ENCODE measurements at regions of chrX and their contacts with region 1.

Region 1: DNA sequence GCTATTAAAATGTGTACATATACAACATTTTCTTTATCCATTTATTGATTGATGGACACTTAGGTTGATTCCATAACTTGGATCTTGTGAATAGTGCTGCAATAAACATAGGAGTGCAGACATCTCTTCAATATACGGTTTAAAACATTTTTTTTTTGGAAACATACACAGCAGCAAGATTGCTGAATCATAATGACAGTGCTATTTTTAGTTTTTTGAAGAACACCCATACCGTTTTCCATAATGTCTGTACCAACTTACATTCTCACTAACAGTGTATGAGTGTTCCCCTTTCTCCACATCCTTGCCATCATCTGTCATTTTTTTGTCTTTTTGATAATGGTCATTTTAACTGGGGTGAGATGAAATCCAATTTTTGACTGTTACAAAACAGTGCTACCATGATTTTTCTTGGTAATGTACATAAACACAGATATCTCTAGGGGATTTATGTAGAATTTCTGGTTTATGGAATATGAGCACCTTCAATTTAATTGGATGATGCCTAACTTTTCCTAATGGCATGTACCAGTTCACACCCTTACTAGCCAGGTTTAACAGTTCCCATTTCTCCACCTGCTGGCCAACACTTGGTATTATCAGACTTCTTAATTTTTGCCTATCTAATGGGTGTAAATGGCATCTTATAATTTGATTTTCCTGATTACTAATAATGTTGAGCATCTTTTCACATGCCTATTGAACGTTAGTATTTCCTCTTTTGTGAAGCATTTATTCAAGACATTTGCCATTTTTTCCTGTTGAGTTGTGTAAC is 21.0 kb upstream of the TMSB15B start:
- DNase-seq: no peak
- ATAC-seq: no peak
- H3K4me3 Mint-ChIP-seq: no peak overlapping the region
- H3K27ac Mint-ChIP-seq: no peak overlapping the region
- H3K4me1 Mint-ChIP-seq: peaks cover 45% of the 10 kb centered on the region
- H3K27me3 Mint-ChIP-seq: no peaks in the 10 kb centered on the region
- CTCF ChIP-seq: peak; percentile 51

Region 2: DNA sequence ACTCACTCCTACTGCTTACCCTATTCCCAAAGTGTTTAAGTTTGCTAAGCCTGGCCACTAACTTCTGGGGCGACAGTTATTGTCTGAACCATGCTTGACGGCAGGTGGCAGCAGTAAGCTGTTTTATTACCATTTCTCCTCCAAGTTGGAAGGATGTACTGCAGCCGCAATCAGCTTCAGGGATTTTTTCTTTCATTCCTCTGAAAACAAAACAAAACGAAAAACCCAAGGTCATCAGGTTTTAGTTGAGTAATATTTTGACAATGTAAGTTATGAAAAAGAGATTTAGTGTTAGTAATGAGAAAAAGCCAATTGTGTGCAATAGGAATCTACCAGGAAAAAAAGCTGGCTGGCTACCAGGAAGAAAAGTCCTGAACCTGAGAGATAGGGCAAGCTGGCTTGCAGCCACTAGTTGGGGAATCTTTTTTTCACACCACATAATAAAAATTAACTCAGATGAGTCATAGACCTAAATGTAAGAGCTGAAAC is 96.2 kb before region 1 on chrX:
- CTCF ChIA-PET with region 1: interaction called, 12 read pairs
- POLR2A ChIA-PET with region 1: no interaction called
- intact Hi-C with region 1: no loop called
- DNase-seq: peak; percentile 62
- ATAC-seq: peak; percentile 58
- H3K4me3 Mint-ChIP-seq: no peak overlapping the region
- H3K27ac Mint-ChIP-seq: no peak overlapping the region
- H3K4me1 Mint-ChIP-seq: no peaks in the 10 kb centered on the region
- H3K27me3 Mint-ChIP-seq: peaks cover 5% of the 10 kb centered on the region
- CTCF ChIP-seq: peak; percentile 66

Region 3: GRCh38 chrX:103918581-103919269 is 22.7 kb before region 1 on chrX:
- CTCF ChIA-PET with region 1: interaction called, 13 read pairs
- POLR2A ChIA-PET with region 1: interaction called, 3 read pairs
- intact Hi-C with region 1: loop called (anchors 1 kb)
- DNase-seq: peak; percentile 75
- ATAC-seq: peak; percentile 89
- H3K4me3 Mint-ChIP-seq: peak overlapping the region; percentile 92
- H3K27ac Mint-ChIP-seq: peak overlapping the region; percentile 97
- H3K4me1 Mint-ChIP-seq: peaks cover 20% of the 10 kb centered on the region
- H3K27me3 Mint-ChIP-seq: no peaks in the 10 kb centered on the region
- CTCF ChIP-seq: no peak

Region 4: DNA sequence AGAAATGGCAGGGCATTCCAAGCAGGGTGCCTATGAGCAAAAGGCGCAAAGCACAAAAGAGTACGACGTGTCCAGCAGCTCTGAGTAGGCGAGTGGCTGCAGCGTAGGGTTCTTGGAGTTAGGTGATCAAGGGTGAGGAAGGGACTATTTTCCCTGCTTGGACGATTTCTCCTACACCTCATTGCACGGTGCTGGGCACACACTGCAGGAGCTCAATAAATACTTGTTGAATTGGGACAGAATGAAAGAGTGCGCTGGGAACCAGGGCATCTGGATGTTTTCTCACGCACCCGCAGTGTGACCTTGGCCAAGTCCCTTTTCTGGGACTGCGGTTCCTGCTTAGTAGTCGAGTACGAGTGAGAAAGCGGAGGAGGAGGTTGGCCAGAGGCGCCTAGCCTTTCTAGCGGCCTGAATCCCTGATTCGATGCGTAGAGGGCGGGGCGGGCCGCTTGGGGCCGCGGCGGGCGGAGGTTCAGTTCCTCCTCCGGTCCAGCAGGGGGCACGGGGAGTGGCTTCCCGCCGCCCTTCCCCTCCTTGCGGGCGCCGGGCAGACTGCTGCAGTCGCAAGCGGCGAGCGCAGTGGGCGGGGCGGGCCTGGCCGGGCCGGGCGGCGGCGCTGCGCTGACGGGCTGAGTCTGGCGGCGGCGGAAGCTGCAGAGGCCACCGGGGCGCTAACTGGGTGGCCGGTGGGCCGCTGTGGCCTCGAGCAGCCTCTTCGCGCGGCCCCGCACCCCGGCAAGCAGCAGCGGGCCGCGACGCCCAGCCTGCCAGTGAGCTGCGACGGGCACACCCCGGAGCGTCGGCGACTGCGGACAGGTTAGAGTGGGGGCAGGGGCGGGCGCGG is 224.7 kb after region 1 on chrX and contains the start of gene FAM199X:
- CTCF ChIA-PET with region 1: no interaction called
- POLR2A ChIA-PET with region 1: no interaction called
- intact Hi-C with region 1: no loop called
- DNase-seq: peak; percentile 86
- ATAC-seq: peak; percentile 99
- H3K4me3 Mint-ChIP-seq: peak within 1 kb of the TSS; percentile 74
- H3K27ac Mint-ChIP-seq: peak within 1 kb of the TSS; percentile 79
- H3K4me1 Mint-ChIP-seq: peaks cover 35% of the 10 kb centered on the region
- H3K27me3 Mint-ChIP-seq: no peaks in the 10 kb centered on the region
- CTCF ChIP-seq: peak; percentile 50
- total RNA-seq, gene FAM199X: 6.9 to 8.0 TPM